PC-3 (cell line): ENCODE measurements at regions of chr17 and their contacts with region 1.

Region 1: DNA sequence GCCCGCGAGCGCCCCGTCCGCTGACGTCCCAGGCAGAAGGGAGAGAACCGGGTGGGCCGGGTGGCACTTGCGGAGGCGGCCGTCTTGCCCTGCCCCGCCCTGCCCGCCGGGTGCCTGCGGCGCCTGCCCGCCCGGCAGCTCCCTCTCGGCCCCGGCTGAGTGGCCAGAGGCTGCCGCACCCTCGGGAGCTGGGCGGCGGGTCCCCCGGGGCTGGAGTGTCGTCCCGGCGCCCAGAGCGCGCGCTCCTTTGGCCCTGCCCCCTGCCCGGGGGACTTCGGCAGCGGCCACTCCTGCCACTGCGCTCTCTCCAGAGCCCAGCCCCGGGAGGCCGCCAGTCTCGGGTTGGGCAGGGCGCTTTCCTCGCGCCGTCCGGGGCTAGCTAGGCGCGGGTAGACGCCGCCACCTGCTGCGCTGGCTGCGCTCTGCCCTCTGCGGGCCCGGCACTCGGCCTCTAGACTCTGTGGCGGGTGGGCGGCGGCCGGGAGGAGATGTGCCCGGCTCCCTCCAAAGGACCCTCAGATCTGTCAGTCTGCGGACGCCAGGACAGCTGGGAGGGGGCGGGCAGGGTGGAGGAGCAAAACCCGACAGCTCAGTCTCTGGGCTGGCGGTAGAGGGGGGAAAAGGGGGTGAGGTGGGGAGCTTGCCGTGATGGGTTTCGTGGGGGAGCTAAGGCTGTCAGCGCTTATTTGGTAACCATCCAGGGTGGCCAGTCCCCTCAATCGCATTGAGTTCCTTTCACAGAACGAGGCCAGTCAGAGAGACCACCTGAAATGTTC is at the start of gene ST6GALNAC2:
- DNase-seq: peak; percentile 84
- ATAC-seq: peak; percentile 94
- H3K4me3 ChIP-seq: peak within 1 kb of the TSS; percentile 80
- H3K27ac ChIP-seq: no peak within 1 kb of the TSS
- H3K4me1 ChIP-seq: 0 out of 2 replicates have a peak, but pooled peaks cover 4% of the 10 kb centered on the region
- H3K27me3 ChIP-seq: no peaks in the 10 kb centered on the region
- CTCF ChIP-seq: peak; percentile 60
- total RNA-seq, gene ST6GALNAC2: 1.0 and 6.4 TPM in 2 replicates

Region 2: GRCh38 chr17:75978938-75979704 is 606.9 kb before region 1 on chr17 and contains the starts of genes ACOX1 and TEN1:
- CTCF ChIA-PET with region 1: no interaction called
- POLR2A ChIA-PET with region 1: no interaction called
- intact Hi-C with region 1: no loop called
- DNase-seq: peak; percentile 98
- ATAC-seq: peak; percentile 93
- H3K4me3 ChIP-seq: peak within 1 kb of the TSS; percentile 94
- H3K27ac ChIP-seq: peak within 1 kb of the TSS; percentile 82
- H3K4me1 ChIP-seq: peaks cover 40% of the 10 kb centered on the region
- H3K27me3 ChIP-seq: no peaks in the 10 kb centered on the region
- CTCF ChIP-seq: peak; percentile 45; the same call in 1 of the 2 replicates
- total RNA-seq, gene ACOX1: 63.2 and 74.9 TPM in 2 replicates
- total RNA-seq, gene TEN1: 58.3 and 62.4 TPM in 2 replicates

Region 3: DNA sequence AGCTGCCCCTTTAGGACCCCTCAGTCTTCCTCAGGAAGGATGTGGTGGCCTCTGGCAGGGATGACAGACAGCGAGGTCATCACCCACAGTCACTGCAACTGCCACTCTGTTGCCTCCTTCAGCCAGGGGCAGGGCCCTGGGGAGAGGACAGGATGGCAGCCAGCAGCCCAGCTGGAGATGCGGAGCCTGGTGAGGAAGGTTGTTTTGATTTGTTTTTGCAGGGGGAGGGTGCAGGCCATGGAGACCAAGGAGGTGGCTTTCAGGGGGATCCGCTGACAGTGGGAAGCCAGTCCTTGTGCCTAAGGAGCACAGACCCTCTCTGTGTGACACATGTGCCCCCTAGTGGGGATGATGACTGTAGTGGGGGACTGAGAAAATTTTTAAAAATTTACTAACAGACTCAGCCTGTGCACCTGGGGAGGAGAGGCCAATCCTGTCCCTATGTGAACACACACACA is 38.8 kb before region 1 on chr17:
- CTCF ChIA-PET with region 1: interaction called, 11 read pairs
- POLR2A ChIA-PET with region 1: no interaction called
- intact Hi-C with region 1: no loop called
- DNase-seq: peak; percentile 80
- ATAC-seq: peak; percentile 61
- H3K4me3 ChIP-seq: peak overlapping the region; percentile 22; the same call in 1 of the 2 replicates
- H3K27ac ChIP-seq: peak overlapping the region; percentile 97
- H3K4me1 ChIP-seq: peaks cover 35% of the 10 kb centered on the region
- H3K27me3 ChIP-seq: no peaks in the 10 kb centered on the region
- CTCF ChIP-seq: peak; percentile 90